A549 (cell line): ENCODE measurements at regions of chr2 and their contacts with region 1.

Region 1: GRCh38 chr2:102872388-102872787 is 110.6 kb downstream of the TMEM182 start:
- DNase-seq: peak in 1 of 2 experiments; percentile 16
- ATAC-seq: no peak
- H3K4me3 ChIP-seq: no peak overlapping the region
- H3K27ac ChIP-seq: no peak overlapping the region
- H3K4me1 ChIP-seq: no peaks in the 10 kb centered on the region
- CTCF ChIP-seq: peak; percentile 35
- EP300 ChIP-seq: no peak
- POLR2A ChIP-seq: no peak
- RAD21 ChIP-seq: peak; percentile 41 to 45

Region 2: DNA sequence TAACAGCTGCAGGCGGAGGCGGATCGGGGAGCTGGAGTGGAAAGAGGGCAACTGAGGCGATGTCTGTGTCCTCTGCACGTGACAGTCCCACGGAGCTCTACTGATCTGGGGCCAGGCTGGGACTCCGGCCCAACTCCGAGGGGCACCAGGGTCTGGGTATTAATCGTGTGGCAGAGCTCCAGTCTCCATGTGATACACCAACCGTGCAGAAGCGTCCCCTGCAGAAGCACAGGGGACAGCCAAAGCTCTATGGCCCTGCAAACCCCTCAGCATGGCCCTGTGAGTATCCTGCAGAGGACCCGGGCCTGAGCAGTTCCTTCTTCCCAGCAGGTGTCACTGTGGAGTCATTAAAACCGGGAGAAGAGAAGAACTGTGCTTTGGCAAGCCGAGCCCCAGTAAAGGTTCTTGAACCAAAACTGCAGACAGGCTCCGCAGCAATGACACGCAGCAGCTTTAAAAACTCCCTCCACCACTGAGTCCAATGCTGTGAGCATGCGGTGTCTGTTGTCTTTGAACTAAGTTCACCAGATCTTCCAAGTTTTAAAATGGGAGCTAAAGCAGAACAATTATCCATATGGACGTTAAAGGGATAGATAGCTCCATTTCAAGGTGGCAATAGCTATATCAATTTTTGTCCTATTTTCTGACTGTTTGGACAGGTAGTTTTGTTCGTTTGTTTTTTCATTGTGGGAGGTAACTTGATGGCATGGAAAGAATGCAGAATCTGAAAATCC is 31.1 kb before region 1 on chr2:
- CTCF ChIA-PET with region 1: interaction called, 43 read pairs
- POLR2A ChIA-PET with region 1: no interaction called
- DNase-seq: peak; percentile 23 to 55
- ATAC-seq: peak; percentile 91 to 98
- H3K4me3 ChIP-seq: no peak overlapping the region
- H3K27ac ChIP-seq: no peak overlapping the region
- H3K4me1 ChIP-seq: no peaks in the 10 kb centered on the region
- CTCF ChIP-seq: peak; percentile 52
- EP300 ChIP-seq: no peak
- POLR2A ChIP-seq: no peak
- RAD21 ChIP-seq: peak; percentile 46 to 54; a peak in 4 of 5 replicates

Region 3: DNA sequence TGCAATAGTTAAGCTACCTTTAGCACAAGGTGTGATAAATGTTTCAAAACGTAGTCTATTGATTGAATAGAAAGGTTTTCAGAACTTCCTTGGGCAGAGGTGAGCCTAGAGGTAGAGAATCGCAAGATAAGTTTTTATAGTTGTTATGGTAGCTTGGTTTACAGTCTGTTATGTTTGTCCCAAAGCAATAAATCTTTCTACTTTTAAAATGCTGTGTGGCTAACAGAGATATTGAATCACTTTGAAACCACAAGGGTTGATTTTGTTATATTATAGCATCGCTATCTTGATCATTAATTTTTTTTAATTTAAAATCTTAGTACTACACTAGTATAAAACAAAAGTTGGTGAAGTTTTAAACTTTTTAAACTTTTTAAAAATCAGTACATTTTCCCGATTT is 16.1 kb after region 1 on chr2:
- CTCF ChIA-PET with region 1: no interaction called
- POLR2A ChIA-PET with region 1: no interaction called
- DNase-seq: no peak
- ATAC-seq: no peak
- H3K4me3 ChIP-seq: no peak overlapping the region
- H3K27ac ChIP-seq: no peak overlapping the region
- H3K4me1 ChIP-seq: no peaks in the 10 kb centered on the region
- CTCF ChIP-seq: no peak
- EP300 ChIP-seq: no peak
- POLR2A ChIP-seq: no peak
- RAD21 ChIP-seq: no peak